Ascending aorta (tissue), 2 donors: ENCODE measurements at regions of chr9 and their contacts with region 1.

Region 1: GRCh38 chr9:134455934-134456739 is 129.9 kb downstream of the RXRA start:
- DNase-seq: peak; percentile 77 to 96
- H3K4me3 ChIP-seq: peak overlapping the region; percentile 43 to 60
- H3K27ac ChIP-seq: peak overlapping the region; percentile 86 to 97
- H3K4me1 ChIP-seq: peaks cover 4 to 32% of the 10 kb centered on the region in 2 donors
- H3K27me3 ChIP-seq: no peaks in the 10 kb centered on the region
- CTCF ChIP-seq: peak in 1 of 3 experiments; percentile 2

Region 2: GRCh38 chr9:134099123-134099787 is 356.9 kb before region 1 on chr9:
- intact Hi-C with region 1: no loop called
- DNase-seq: no peak
- H3K4me3 ChIP-seq: no peak overlapping the region
- H3K27ac ChIP-seq: no peak overlapping the region
- H3K4me1 ChIP-seq: no peaks in the 10 kb centered on the region
- H3K27me3 ChIP-seq: no peaks in the 10 kb centered on the region
- CTCF ChIP-seq: peak in 2 of 3 experiments; percentile 14 to 37

Region 3: GRCh38 chr9:134112561-134112960 is 343.6 kb before region 1 on chr9:
- intact Hi-C with region 1: no loop called
- DNase-seq: no peak
- H3K4me3 ChIP-seq: no peak overlapping the region
- H3K27ac ChIP-seq: no peak overlapping the region
- H3K4me1 ChIP-seq: no peaks in the 10 kb centered on the region
- H3K27me3 ChIP-seq: no peaks in the 10 kb centered on the region
- CTCF ChIP-seq: no peak

Region 4: GRCh38 chr9:134475011-134475790 is 19.1 kb after region 1 on chr9:
- intact Hi-C with region 1: loop called (anchors 2 kb)
- DNase-seq: peak in 1 of 2 donors; percentile 88
- H3K4me3 ChIP-seq: peak overlapping the region in 1 of 2 donors; percentile 2
- H3K27ac ChIP-seq: peak overlapping the region; percentile 78 to 90
- H3K4me1 ChIP-seq: peaks cover 43 to 45% of the 10 kb centered on the region in 2 donors
- H3K27me3 ChIP-seq: no peaks in the 10 kb centered on the region
- CTCF ChIP-seq: no peak

Region 5: GRCh38 chr9:134544388-134545214 is 88.5 kb after region 1 on chr9:
- intact Hi-C with region 1: loop called (anchors 5 kb)
- DNase-seq: peak in 1 of 2 donors; percentile 80
- H3K4me3 ChIP-seq: no peak overlapping the region
- H3K27ac ChIP-seq: peak overlapping the region in 1 of 2 donors; percentile 81
- H3K4me1 ChIP-seq: peaks cover 4 to 7% of the 10 kb centered on the region in 2 donors
- H3K27me3 ChIP-seq: no peaks in the 10 kb centered on the region
- CTCF ChIP-seq: no peak

Region 6: DNA sequence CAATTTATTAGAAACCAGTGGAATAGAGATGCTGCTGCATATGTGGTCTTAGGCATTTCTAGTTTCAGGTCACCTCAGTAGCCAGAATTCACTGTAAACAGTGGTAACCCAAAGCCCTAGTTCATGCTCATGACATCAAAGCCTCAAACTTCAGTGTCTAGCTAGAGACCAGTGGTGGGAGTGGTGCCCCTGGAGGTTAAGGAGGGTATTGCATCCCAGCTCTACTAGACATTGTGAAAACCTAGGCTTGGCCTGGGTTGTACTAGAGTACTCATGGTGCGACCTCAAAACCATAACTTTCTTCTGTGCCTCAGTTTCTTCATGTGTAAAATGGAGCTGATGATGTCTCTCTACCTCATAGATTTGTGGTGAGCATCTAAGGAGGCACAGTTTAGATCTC is 204.3 kb after region 1 on chr9:
- intact Hi-C with region 1: loop called (anchors 5 kb)
- DNase-seq: no peak
- H3K4me3 ChIP-seq: no peak overlapping the region
- H3K27ac ChIP-seq: peak overlapping the region; percentile 79 to 88
- H3K4me1 ChIP-seq: peaks cover 33 to 59% of the 10 kb centered on the region in 2 donors
- H3K27me3 ChIP-seq: no peaks in the 10 kb centered on the region
- CTCF ChIP-seq: peak in 2 of 3 experiments; percentile 22 to 40

Region 7: DNA sequence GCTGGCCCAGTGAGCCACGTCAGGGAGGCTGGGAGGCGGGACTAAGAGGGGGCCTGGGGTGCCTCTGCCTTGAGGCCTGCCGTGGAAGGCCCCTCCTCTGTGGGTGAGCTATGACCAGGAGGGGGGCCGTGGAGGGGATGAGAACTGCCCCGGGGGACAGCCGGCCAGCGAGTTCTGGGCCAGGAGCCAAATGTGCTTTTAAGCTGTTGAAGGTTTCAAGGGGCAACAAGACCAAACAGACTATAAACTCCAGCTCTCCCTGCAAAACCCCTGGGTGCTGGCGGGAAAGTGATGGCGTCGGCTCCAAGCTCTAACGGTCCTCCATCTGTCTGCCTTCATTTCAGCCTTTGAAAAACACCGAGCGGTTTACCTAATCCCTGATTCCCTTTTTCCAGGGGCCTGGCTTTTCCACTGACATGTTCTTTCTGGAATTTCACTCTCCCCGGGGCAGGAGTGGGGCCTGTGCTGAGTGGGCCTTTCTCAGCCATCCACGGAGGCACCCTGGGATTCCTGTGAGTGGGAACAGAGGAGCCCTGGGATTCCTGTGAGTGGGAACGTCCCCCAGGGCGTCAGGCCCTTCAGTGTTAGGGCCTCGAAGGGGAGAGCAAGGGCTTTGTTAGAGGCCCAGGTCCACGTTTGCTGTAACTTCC is 251.0 kb after region 1 on chr9:
- intact Hi-C with region 1: loop called (anchors 5 kb)
- DNase-seq: peak; percentile 51 to 91
- H3K4me3 ChIP-seq: no peak overlapping the region
- H3K27ac ChIP-seq: peak overlapping the region; percentile 87 to 94
- H3K4me1 ChIP-seq: peaks cover 30 to 44% of the 10 kb centered on the region in 2 donors
- H3K27me3 ChIP-seq: no peaks in the 10 kb centered on the region
- CTCF ChIP-seq: no peak